ENCODE measurements at regions of chr5 and their contacts with region 1.

Region 1: DNA sequence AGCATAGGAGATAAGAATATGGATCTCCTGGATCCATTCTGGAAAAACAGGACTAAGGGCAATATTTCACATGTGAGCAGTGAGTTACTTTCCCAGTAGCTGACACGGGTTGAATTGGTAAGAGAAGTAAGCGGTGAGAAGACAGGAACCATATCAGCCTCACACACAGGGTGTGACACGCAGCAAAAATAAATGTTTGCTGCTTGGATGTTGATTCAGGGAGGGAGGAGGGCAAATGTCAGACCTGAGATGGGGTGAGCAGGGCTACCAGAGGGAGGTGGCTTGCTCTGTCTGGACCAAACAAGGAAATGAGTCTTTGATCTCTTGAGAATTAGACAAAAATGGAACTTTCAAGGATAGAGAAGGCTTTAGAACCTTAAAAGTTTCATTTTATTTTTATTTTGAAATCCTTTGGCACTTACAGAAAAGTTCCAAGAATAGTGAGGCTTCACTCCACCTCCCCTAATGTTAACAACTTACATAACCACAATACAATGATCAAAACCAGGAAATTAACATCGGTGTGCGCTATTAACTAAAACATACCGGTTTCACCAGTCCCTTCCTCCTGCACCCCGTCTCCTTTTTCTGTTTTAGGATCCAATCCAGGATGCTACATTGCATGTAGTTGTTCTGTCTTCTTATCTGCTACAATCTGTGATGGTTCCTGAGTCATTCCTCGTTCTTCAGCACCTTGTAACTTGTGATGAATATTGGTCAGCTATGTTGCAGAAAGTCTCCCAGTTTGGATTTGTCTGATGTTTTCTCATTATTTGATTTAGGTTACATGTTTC is 20.6 kb upstream of the ARHGEF28 start:
- DNase-seq: peak in 1 of 3 donors; percentile 58
- ATAC-seq: peak; percentile 100
- H3K4me3 ChIP-seq: no peak overlapping the region
- H3K4me1 ChIP-seq: no peaks in the 10 kb centered on the region
- CTCF ChIP-seq: no peak

Region 2: GRCh38 chr5:73344835-73345234 is 260.6 kb before region 1 on chr5:
- intact Hi-C with region 1: no loop called
- DNase-seq: no peak
- ATAC-seq: no peak
- H3K4me3 ChIP-seq: no peak overlapping the region
- H3K4me1 ChIP-seq: no peaks in the 10 kb centered on the region
- CTCF ChIP-seq: no peak

Region 3: GRCh38 chr5:73673161-73673591 is 67.8 kb after region 1 on chr5:
- intact Hi-C with region 1: no loop called
- DNase-seq: no peak
- ATAC-seq: peak; percentile 92
- H3K4me3 ChIP-seq: no peak overlapping the region
- H3K4me1 ChIP-seq: peaks cover 7% of the 10 kb centered on the region
- CTCF ChIP-seq: no peak

Region 4: GRCh38 chr5:73693481-73694061 is 88.1 kb after region 1 on chr5:
- intact Hi-C with region 1: loop called in 1 of 2 experiments (anchors 10 kb)
- DNase-seq: peak in 1 of 3 donors; percentile 58
- ATAC-seq: peak; percentile 68
- H3K4me3 ChIP-seq: no peak overlapping the region
- H3K4me1 ChIP-seq: no peaks in the 10 kb centered on the region
- CTCF ChIP-seq: no peak

Measured in mucosa of descending colon (tissue), 3 donors.